Naive thymus-derived CD8-positive, alpha-beta T cell (primary cell): ENCODE measurements at regions of chr11 and their contacts with region 1.

Region 1: GRCh38 chr11:128039140-128040021 is 548.0 kb downstream of the ETS1 start:
- DNase-seq: peak; percentile 27 to 86 (median 69)
- ATAC-seq: peak; percentile 96 to 98
- H3K4me3 Mint-ChIP-seq: peak overlapping the region in 8 of 10 donors; percentile 51 to 86 (median 76)
- H3K27ac Mint-ChIP-seq: peak overlapping the region; percentile 64 to 96 (median 92)
- H3K4me1 Mint-ChIP-seq: peaks cover 23 to 54% (median 39%) of the 10 kb centered on the region in 4 donors
- H3K27me3 Mint-ChIP-seq: no peaks in the 10 kb centered on the region

Region 2: DNA sequence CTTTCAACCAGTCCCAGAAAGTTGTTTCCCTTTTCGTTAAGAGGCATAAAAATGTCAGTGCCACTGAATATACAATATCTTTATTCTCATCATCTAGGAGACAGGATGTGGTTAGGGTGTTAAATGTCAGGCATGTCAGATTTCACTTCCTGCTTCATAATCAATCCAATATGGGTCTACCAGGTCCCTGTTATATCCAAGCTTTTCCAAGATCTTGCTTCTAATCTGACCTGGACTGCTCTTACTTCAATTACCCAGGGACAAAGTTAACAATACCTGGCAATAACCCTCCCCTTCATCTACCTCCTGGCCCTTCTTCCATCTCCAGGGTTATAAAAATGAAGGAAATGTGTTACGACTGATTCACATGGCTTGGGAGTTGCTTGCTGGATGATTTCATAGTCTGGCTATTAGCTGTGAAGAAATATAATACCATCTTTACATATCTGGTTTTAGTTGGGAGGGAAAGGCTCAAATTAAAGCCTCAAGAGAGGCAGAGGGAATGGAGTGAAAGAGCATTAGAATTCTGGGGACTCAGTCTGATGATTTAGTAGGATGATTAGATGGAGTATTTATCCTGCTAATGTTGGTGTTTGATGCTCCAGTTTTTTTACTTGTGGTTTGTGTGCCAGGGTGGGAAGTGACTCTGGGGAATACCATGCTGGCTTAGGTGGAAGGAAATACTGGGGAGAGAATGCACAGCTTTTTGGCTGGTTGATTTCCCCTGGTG is 13.7 kb after region 1 on chr11:
- POLR2A ChIA-PET with region 1: interaction called, 72 read pairs
- DNase-seq: peak in 3 of 10 donors; percentile 32 to 57 (median 53)
- ATAC-seq: peak; percentile 50 to 84
- H3K4me3 Mint-ChIP-seq: peak overlapping the region; percentile 40 to 85 (median 81)
- H3K27ac Mint-ChIP-seq: peak overlapping the region; percentile 69 to 98 (median 90)
- H3K4me1 Mint-ChIP-seq: peaks cover 42 to 82% (median 77%) of the 10 kb centered on the region in 4 donors
- H3K27me3 Mint-ChIP-seq: no peaks in the 10 kb centered on the region

Region 3: GRCh38 chr11:128086794-128087193 is 47.4 kb after region 1 on chr11:
- POLR2A ChIA-PET with region 1: interaction called, 10 read pairs
- DNase-seq: peak in 6 of 10 donors; percentile 10 to 64 (median 17)
- ATAC-seq: peak; percentile 66 to 71
- H3K4me3 Mint-ChIP-seq: peak overlapping the region in 7 of 10 donors; percentile 0 to 68 (median 27)
- H3K27ac Mint-ChIP-seq: peak overlapping the region in 8 of 10 donors; percentile 8 to 84 (median 62)
- H3K4me1 Mint-ChIP-seq: peaks cover 18 to 47% (median 43%) of the 10 kb centered on the region in 4 donors
- H3K27me3 Mint-ChIP-seq: no peaks in the 10 kb centered on the region